ENCODE measurements at regions of chr10 and their contacts with region 1.

Region 1: GRCh38 chr10:71974489-71975021 is 10.4 kb downstream of the CHST3 start:
- DNase-seq: peak in 1 of 5 donors; percentile 70
- ATAC-seq: peak in 3 of 4 donors; percentile 14 to 54 (median 16)
- H3K4me3 ChIP-seq: no peak overlapping the region
- H3K27ac ChIP-seq: peak overlapping the region in 11 of 12 donors; percentile 71 to 91 (median 81)
- H3K4me1 ChIP-seq: peaks cover 7 to 99% (median 88%) of the 10 kb centered on the region in 12 donors
- H3K27me3 ChIP-seq: no peaks in the 10 kb centered on the region
- CTCF ChIP-seq: no peak
- POLR2A ChIP-seq: no peak

Region 2: DNA sequence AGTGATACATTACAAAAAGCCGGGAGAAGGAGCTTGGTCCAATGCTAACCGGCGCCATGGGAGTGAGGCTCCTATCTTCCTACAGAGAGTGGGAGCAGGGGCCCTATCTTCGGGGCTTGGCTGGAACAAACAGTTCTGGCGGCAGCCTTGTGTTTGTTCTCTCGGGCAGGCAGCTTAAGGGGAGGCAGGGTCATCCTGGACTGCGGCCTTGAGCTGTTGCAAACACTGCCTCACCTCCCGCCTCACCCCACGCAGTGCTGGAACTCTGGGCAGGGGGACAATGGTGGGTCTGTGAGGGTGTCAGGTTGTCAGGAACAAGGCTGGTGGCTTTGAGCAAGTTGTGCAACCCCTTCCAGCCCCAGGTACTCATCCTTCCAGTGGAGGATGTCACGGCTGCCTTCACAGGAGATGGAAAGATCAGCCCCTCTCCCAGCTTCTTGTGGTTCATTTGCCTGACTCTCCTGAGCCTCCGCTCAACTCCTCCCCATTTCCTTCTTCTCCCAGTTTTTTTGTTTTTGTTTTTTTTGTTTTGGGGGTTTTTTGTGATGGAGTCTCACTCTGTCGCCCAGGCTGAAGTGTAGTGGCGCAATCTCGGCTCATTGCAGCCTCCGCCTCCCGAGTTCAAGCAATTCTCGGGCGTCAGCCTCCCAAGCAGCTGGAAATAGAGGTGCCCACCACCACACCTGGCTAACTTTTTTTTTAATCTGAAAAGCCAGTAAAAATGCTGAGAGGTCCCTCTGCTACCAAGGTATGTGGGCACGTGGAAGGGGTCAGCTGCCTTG is 56.4 kb after region 1 on chr10:
- intact Hi-C with region 1: loop called in 1 of 10 experiments (anchors 5 kb)
- DNase-seq: peak in 4 of 5 donors; percentile 50 to 87 (median 78)
- ATAC-seq: peak; percentile 92 to 93 (median 92)
- H3K4me3 ChIP-seq: no peak overlapping the region
- H3K27ac ChIP-seq: peak overlapping the region in 10 of 12 donors; percentile 10 to 80 (median 65)
- H3K4me1 ChIP-seq: peaks cover 0 to 43% (median 12%) of the 10 kb centered on the region in 12 donors
- H3K27me3 ChIP-seq: no peaks in the 10 kb centered on the region
- CTCF ChIP-seq: no peak
- POLR2A ChIP-seq: no peak